ENCODE measurements at regions of chr2 and their contacts with region 1.

Region 1: GRCh38 chr2:224585205-224586088 is at the start of gene CUL3:
- DNase-seq: peak; percentile 95
- ATAC-seq: peak; percentile 90
- H3K4me3 ChIP-seq: peak within 1 kb of the TSS; percentile 76
- H3K27ac ChIP-seq: peak within 1 kb of the TSS; percentile 43
- H3K4me1 ChIP-seq: peaks cover 25% of the 10 kb centered on the region
- H3K27me3 ChIP-seq: no peaks in the 10 kb centered on the region
- CTCF ChIP-seq: no peak
- total RNA-seq, gene CUL3: 50.4 and 54.9 TPM in 2 replicates

Region 2: GRCh38 chr2:224469374-224469964 is 116.0 kb before region 1 on chr2:
- CTCF ChIA-PET with region 1: no interaction called
- POLR2A ChIA-PET with region 1: no interaction called
- intact Hi-C with region 1: no loop called
- DNase-seq: no peak
- ATAC-seq: no peak
- H3K4me3 ChIP-seq: no peak overlapping the region
- H3K27ac ChIP-seq: no peak overlapping the region
- H3K4me1 ChIP-seq: no peaks in the 10 kb centered on the region
- H3K27me3 ChIP-seq: no peaks in the 10 kb centered on the region
- CTCF ChIP-seq: no peak

Region 3: DNA sequence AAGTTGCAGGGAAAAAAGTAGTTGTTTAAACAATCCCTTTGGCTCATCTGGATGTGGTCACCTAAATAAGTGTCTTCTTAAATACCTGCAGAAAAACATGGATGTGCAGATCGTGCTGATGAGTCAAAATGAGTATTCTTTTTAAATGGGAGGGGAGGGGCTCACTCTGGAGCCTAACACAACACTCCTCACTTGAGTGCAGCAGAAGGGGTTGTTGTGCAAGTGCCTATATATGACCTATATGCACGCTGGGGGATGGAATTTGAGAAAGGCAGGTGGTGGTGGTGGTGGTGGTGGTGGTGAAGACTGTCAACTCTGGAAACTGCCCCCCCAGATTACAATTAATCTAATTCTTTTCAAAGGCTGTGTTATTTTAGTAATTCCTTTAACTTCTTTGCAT is 105.6 kb before region 1 on chr2:
- CTCF ChIA-PET with region 1: no interaction called
- POLR2A ChIA-PET with region 1: no interaction called
- intact Hi-C with region 1: loop called (anchors 2 kb)
- DNase-seq: peak; percentile 38
- ATAC-seq: no peak
- H3K4me3 ChIP-seq: no peak overlapping the region
- H3K27ac ChIP-seq: no peak overlapping the region
- H3K4me1 ChIP-seq: peaks cover 43% of the 10 kb centered on the region
- H3K27me3 ChIP-seq: no peaks in the 10 kb centered on the region
- CTCF ChIP-seq: no peak